Right ventricle myocardium inferior (tissue), 1 donor: ENCODE measurements at regions of chr12 and their contacts with region 1.

Region 1: DNA sequence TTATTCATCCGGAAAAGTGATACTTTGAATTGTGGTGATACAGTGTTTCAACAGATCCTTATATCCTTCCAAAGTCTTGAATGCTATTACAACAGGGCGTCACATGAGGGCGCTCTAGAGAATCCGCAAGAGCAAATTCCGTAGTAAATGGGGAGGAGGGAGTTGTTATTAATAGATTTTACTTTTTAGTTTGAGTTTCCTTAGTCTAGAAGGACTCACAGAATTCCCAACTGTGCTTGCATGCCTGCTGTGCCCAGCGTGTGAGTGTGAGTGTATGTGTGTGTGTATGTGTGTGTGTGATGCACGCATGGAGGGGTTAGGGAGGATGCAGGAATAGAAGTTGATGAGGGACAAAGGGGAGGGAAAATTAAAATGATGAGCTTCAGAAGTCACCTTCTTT is 375.3 kb downstream of the C12orf75 start:
- DNase-seq: no peak
- ATAC-seq: peak; percentile 48

Region 2: DNA sequence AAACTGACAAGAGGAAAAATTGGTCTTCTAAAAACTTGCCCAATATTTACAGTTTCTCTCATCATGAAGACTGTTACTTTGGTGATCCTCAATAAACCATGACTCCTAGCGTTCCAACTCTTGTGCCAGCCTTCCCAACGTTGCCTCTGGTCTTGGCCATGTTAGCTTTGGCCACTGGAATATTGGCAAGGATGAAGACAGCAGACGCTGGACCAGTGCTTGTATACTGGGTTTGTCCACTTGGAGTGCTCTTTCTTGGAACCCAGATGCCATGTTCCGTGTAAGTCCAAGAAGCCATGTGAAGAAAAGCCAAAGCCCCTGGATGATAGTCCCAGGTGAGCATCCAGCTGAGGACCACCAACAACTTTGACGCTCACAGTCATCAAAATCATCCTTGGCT is 53.4 kb after region 1 on chr12:
- intact Hi-C with region 1: no loop called
- DNase-seq: no peak
- ATAC-seq: no peak

Region 3: GRCh38 chr12:106149096-106149784 is 443.5 kb after region 1 on chr12:
- intact Hi-C with region 1: loop called (anchors 5 kb)
- DNase-seq: no peak
- ATAC-seq: no peak